GM10248 (cell line): ENCODE measurements at regions of chr22 and their contacts with region 1.

Region 1: GRCh38 chr22:33018232-33018864 is 39.8 kb downstream of the SYN3 start:
- DNase-seq: peak; percentile 64
- CTCF ChIP-seq: peak; percentile 87

Region 2: GRCh38 chr22:33000342-33001280 is 17.7 kb before region 1 on chr22:
- CTCF ChIA-PET with region 1: interaction called, 12 read pairs
- POLR2A ChIA-PET with region 1: no interaction called
- DNase-seq: peak; percentile 37
- CTCF ChIP-seq: peak; percentile 81

Region 3: DNA sequence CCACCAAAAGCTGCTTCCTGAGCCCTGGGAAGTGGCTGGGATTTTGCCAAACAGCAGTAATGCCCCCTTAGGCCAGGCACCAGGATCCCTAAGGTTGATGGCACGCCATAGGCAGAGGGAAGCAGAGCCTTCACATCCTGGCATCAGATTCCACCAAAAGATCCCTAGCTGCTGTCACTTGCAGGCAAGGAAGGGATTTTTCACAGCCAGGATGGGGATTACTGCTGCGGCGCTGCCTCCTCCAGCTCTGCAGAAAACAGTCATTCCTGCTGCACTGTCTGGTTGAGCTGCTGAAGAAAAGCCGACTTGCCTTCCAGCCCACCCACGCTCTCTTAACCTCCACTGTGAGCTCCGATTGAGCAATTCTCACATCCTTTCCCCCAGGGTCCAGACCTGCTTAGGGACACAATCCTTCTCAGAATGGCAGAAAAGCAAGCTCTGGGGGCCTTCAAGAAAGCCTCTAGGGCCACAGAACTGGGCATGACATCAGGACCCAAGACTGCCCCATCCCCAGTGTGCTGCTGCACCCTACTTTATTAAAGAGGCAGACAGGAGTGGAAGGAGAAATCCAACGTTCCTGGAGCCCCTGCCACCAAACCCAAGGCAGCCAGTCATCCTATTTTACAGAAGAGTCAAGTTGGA is 19.9 kb after region 1 on chr22:
- CTCF ChIA-PET with region 1: interaction called, 17 read pairs
- POLR2A ChIA-PET with region 1: no interaction called
- DNase-seq: no peak
- CTCF ChIP-seq: no peak

Region 4: GRCh38 chr22:33049119-33049729 is 30.9 kb after region 1 on chr22:
- CTCF ChIA-PET with region 1: interaction called, 37 read pairs
- POLR2A ChIA-PET with region 1: no interaction called
- DNase-seq: peak; percentile 75
- CTCF ChIP-seq: peak; percentile 79

Region 5: GRCh38 chr22:33070600-33070999 is 52.3 kb after region 1 on chr22:
- CTCF ChIA-PET with region 1: no interaction called
- POLR2A ChIA-PET with region 1: no interaction called
- DNase-seq: no peak
- CTCF ChIP-seq: no peak

Region 6: GRCh38 chr22:33116872-33117547 is 98.7 kb after region 1 on chr22:
- CTCF ChIA-PET with region 1: no interaction called
- POLR2A ChIA-PET with region 1: no interaction called
- DNase-seq: no peak
- CTCF ChIP-seq: no peak

Region 7: GRCh38 chr22:33209930-33210784 is 191.8 kb after region 1 on chr22:
- CTCF ChIA-PET with region 1: interaction called, 34 read pairs
- POLR2A ChIA-PET with region 1: no interaction called
- DNase-seq: peak; percentile 83
- CTCF ChIP-seq: peak; percentile 54